Heart left ventricle (tissue), 16 donors: ENCODE measurements at regions of chr12 and their contacts with region 1.

Region 1: DNA sequence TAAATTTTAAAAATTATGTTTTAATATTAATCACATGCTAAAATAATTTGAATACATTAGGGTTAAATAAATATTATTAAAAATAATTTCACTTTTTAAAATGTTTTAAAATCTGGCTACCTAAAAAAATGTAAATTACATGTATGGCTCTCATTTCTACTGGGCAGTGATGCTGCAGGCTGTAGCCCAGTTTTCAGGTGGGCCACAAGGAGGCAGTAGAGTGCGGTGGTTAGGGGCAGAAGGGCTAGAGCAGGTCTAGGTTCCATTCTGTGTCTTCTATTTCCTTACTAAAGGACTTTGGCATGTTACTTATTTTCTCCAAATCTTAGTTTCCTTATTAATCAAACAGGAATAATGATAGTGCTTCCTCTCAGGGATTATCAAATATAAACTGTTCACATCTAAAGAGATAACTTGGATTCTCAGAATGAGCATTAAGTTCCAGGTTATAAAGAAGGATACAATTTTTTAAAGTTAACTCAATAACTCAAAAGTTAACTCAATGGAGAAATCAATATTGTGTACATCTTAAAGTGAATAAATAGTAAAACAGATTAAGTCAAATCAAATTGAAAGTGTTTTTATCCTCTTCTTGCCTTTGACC is 54.9 kb upstream of the OVCH1 start:
- DNase-seq: peak; percentile 53 to 80 (median 75)
- ATAC-seq: peak; percentile 78 to 95 (median 92)
- H3K4me3 ChIP-seq: no peak overlapping the region
- H3K27ac ChIP-seq: peak overlapping the region in 6 of 12 donors; percentile 1 to 54 (median 22)
- H3K4me1 ChIP-seq: peaks cover 0 to 20% (median 8%) of the 10 kb centered on the region in 12 donors
- H3K27me3 ChIP-seq: no peaks in the 10 kb centered on the region
- CTCF ChIP-seq: peak; percentile 85 to 96 (median 91)
- POLR2A ChIP-seq: no peak

Region 2: GRCh38 chr12:29634057-29634456 is 81.6 kb after region 1 on chr12:
- intact Hi-C with region 1: loop called in 1 of 10 experiments (anchors 10 kb)
- DNase-seq: no peak
- ATAC-seq: no peak
- H3K4me3 ChIP-seq: no peak overlapping the region
- H3K27ac ChIP-seq: no peak overlapping the region
- H3K4me1 ChIP-seq: no peaks in the 10 kb centered on the region
- H3K27me3 ChIP-seq: no peaks in the 10 kb centered on the region
- CTCF ChIP-seq: no peak
- POLR2A ChIP-seq: no peak

Region 3: DNA sequence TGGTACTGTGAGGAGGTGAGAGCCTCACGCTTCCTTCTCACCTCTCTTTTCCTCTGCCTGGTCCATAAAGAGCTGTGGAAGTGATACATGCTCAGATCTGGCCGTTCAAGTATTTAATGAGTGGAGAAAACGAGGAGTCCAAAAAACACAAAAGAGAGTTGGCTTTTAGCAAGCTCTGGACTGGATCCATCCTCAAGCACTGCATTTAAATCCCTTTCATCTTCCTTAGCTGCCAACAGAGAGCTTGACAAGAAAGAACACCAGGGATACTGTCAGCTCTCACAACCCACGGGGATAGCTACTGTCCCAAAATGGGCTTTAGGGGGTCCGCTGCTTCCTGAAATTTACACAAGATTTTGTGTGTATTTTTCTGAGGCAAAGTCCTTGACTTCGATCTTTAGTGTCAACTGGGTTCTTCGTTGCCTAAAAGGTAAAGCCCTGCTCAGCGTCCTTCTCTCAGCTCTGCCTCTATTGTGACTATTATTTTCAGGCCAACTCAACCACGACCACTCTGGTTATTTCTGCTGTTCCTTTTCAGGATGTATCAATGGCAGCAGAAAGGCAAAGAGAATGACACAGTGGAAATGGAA is 110.4 kb after region 1 on chr12:
- intact Hi-C with region 1: loop called in 1 of 10 experiments (anchors 10 kb)
- DNase-seq: no peak
- ATAC-seq: peak in 3 of 4 donors; percentile 25 to 69 (median 57)
- H3K4me3 ChIP-seq: no peak overlapping the region
- H3K27ac ChIP-seq: peak overlapping the region in 2 of 12 donors; percentile 22
- H3K4me1 ChIP-seq: peaks cover 0 to 26% (median 0%) of the 10 kb centered on the region in 12 donors
- H3K27me3 ChIP-seq: no peaks in the 10 kb centered on the region
- CTCF ChIP-seq: no peak
- POLR2A ChIP-seq: no peak

Region 4: DNA sequence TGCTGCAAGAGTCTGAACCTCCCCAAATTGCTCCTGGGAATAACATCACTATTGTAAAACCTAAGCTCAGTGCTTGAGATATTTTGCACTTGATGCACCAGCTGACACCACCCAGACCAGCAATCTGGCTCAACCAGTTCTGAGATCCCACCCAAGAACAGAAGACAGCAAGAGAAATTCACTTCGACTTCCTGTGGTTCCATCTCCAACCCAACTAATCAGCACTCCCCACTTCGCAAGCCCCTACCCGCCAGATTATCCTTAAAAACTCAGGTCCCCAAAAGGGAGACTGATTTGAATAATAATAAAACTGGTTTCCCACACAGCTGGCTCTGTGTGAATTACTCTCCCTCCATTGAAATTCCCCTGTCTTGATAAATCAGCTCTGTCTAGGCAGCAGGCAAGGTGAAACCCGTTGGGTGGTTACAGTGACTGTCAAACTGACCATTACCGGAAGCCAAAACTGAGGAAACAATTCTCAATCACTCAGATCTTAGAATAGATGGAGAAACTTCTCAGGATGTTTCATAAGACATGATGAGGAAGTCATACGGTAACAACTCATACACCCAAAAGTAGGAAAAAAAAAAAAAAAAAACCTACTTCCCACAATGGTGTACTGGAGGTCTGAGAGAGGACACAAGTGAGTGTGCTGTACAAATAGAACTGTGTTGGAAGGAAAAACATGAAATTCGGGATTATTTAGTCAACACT is 138.9 kb after region 1 on chr12:
- intact Hi-C with region 1: no loop called
- DNase-seq: no peak
- ATAC-seq: peak in 2 of 4 donors; percentile 43 to 48
- H3K4me3 ChIP-seq: no peak overlapping the region
- H3K27ac ChIP-seq: no peak overlapping the region
- H3K4me1 ChIP-seq: peaks cover 0 to 20% (median 0%) of the 10 kb centered on the region in 12 donors
- H3K27me3 ChIP-seq: no peaks in the 10 kb centered on the region
- CTCF ChIP-seq: no peak
- POLR2A ChIP-seq: no peak

Region 5: DNA sequence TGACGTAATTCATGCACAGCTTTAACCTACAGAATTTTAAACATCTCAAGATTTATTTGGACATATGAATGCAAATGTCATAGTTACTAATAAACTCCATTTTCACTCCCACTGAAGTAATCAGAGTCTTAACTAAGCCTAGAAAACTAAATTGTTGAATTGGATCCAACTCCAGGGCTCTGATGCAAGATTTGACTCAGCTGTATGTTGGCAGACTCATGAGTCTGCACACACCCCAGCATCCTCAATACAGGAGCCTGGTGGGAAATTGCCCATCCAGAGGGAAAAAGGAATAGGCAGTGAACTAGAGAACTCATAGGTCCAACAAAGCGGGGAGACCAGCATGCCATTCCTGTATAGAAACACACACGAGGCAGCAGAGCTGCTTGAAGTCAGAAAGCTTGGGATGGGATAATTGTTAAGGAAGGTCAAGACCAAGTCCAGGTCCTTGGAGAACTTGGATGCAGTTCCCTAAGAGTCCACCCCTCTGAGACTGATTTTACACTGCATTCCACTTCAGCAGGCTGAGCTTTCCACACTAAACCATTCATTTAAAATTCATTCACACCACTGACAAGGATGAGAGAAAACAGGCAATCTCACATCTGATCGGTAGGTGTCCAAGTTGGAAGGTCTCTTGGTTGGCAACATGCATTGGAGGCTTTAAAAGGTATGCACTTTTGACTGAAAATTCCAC is 216.9 kb after region 1 on chr12:
- intact Hi-C with region 1: loop called in 1 of 10 experiments (anchors 10 kb)
- DNase-seq: no peak
- ATAC-seq: peak in 3 of 4 donors; percentile 49 to 93 (median 88)
- H3K4me3 ChIP-seq: no peak overlapping the region
- H3K27ac ChIP-seq: no peak overlapping the region
- H3K4me1 ChIP-seq: peaks cover 0 to 39% (median 15%) of the 10 kb centered on the region in 12 donors
- H3K27me3 ChIP-seq: no peaks in the 10 kb centered on the region
- CTCF ChIP-seq: no peak
- POLR2A ChIP-seq: no peak

Region 6: GRCh38 chr12:30286345-30286926 is 734.0 kb after region 1 on chr12:
- intact Hi-C with region 1: loop called in 1 of 10 experiments (anchors 5 kb)
- DNase-seq: no peak
- ATAC-seq: no peak
- H3K4me3 ChIP-seq: no peak overlapping the region
- H3K27ac ChIP-seq: no peak overlapping the region
- H3K4me1 ChIP-seq: no peaks in the 10 kb centered on the region
- H3K27me3 ChIP-seq: no peaks in the 10 kb centered on the region
- CTCF ChIP-seq: peak in 11 of 12 donors; percentile 17 to 56 (median 34)
- POLR2A ChIP-seq: no peak